Activated CD8-positive, alpha-beta memory T cell treated with anti-CD3 and anti-CD28 coated beads, Interleukin-2, amount 10 ng/mL, durations not matched to agents 7 days and 5 days (primary cell): ENCODE measurements at regions of chr3 and their contacts with region 1.

Region 1: GRCh38 chr3:129399145-129399894 is 29.1 kb downstream of the EFCAB12 start:
- DNase-seq: peak; percentile 84
- ATAC-seq: peak; percentile 86
- H3K4me3 Mint-ChIP-seq: peak overlapping the region; percentile 98
- H3K27ac Mint-ChIP-seq: peak overlapping the region; percentile 97
- H3K4me1 Mint-ChIP-seq: peaks cover 37% of the 10 kb centered on the region
- H3K27me3 Mint-ChIP-seq: no peaks in the 10 kb centered on the region

Region 2: DNA sequence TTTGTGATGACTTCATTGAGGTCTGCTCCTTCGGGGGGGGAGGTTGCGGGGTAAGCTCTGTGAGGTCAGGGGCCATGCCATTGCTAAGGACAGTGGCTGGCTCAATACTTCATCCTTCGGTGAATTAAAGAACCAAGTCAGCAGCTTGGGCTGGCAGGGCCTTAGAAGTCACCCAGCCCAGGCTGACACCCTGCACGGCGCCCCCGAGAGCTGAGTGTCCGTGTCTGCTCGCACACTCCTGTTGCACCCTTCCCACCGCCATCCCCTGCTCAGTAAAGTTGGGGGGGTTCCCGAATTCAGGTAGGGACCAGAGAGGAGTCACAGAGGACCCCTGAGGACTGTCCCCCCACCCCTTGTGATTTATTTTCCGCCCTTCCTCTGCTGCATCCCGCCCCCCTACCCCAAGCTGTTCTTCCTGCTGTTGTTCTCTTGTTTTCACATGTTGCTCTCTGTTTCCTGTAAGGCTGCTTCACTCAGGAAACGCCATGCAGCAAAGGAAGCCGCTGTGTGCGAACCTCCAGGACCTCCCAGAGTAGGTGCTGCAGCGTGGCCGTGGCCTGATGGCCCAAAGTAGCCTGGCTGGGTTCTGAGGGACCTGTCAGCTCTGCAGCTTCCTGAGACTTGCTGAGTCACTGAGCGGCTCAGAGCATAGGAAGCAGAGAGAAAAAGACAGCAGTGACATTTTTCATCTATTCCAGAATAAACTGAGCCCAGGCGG is 383.8 kb before region 1 on chr3:
- CTCF ChIA-PET with region 1: no interaction called
- DNase-seq: peak; percentile 72
- ATAC-seq: peak; percentile 63
- H3K4me3 Mint-ChIP-seq: peak overlapping the region; percentile 66
- H3K27ac Mint-ChIP-seq: peak overlapping the region; percentile 95
- H3K4me1 Mint-ChIP-seq: peaks cover 38% of the 10 kb centered on the region
- H3K27me3 Mint-ChIP-seq: no peaks in the 10 kb centered on the region

Region 3: GRCh38 chr3:129052675-129053074 is 346.6 kb before region 1 on chr3:
- CTCF ChIA-PET with region 1: no interaction called
- DNase-seq: no peak
- ATAC-seq: no peak
- H3K4me3 Mint-ChIP-seq: no peak overlapping the region
- H3K27ac Mint-ChIP-seq: no peak overlapping the region
- H3K4me1 Mint-ChIP-seq: peaks cover 6% of the 10 kb centered on the region
- H3K27me3 Mint-ChIP-seq: peaks cover 15% of the 10 kb centered on the region

Region 4: GRCh38 chr3:129383292-129383860 is 15.9 kb before region 1 on chr3:
- CTCF ChIA-PET with region 1: interaction called, 13 read pairs
- DNase-seq: peak; percentile 66
- ATAC-seq: peak; percentile 94
- H3K4me3 Mint-ChIP-seq: no peak overlapping the region
- H3K27ac Mint-ChIP-seq: no peak overlapping the region
- H3K4me1 Mint-ChIP-seq: no peaks in the 10 kb centered on the region
- H3K27me3 Mint-ChIP-seq: no peaks in the 10 kb centered on the region

Region 5: GRCh38 chr3:129409541-129409940 is 10.2 kb after region 1 on chr3:
- CTCF ChIA-PET with region 1: interaction called, 10 read pairs
- DNase-seq: no peak
- ATAC-seq: no peak
- H3K4me3 Mint-ChIP-seq: no peak overlapping the region
- H3K27ac Mint-ChIP-seq: no peak overlapping the region
- H3K4me1 Mint-ChIP-seq: peaks cover 6% of the 10 kb centered on the region
- H3K27me3 Mint-ChIP-seq: peaks cover 2% of the 10 kb centered on the region